WTC11 (cell line): ENCODE measurements at regions of chr19 and their contacts with region 1.

Region 1: GRCh38 chr19:30001791-30002190 is 59.8 kb downstream of the URI1 start:
- DNase-seq: no peak
- ATAC-seq: no peak
- H3K4me3 Mint-ChIP-seq: no peak overlapping the region
- H3K27ac Mint-ChIP-seq: no peak overlapping the region
- H3K4me1 Mint-ChIP-seq: peaks cover 23% of the 10 kb centered on the region
- H3K27me3 Mint-ChIP-seq: no peaks in the 10 kb centered on the region
- CTCF ChIP-seq: no peak

Region 2: DNA sequence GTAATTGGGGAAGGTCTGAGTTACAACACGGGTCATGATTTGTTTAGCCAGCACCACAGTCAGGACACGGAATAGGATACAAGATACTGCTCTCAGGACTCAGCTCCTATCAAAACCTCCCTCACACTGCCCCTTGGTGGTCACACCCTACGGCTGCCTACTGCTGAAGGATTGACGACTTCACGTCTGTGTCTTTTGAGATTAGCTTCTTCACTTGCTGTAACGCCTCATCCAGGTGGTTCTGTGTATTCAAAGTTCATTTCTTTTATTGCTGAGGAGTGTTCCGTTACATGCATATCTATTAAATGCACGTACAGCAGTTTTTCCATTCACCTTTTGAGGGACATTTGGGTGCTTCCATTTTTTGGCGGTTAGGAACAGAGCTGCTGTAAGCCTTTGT is 13.4 kb before region 1 on chr19:
- CTCF ChIA-PET with region 1: interaction called, 10 read pairs
- POLR2A ChIA-PET with region 1: no interaction called
- DNase-seq: peak; percentile 51
- ATAC-seq: peak; percentile 92
- H3K4me3 Mint-ChIP-seq: no peak overlapping the region
- H3K27ac Mint-ChIP-seq: peak overlapping the region; percentile 17; the same call in 1 of the 2 replicates
- H3K4me1 Mint-ChIP-seq: peaks cover 29% of the 10 kb centered on the region
- H3K27me3 Mint-ChIP-seq: no peaks in the 10 kb centered on the region
- CTCF ChIP-seq: no peak

Region 3: GRCh38 chr19:30046522-30046921 is 44.7 kb after region 1 on chr19:
- CTCF ChIA-PET with region 1: no interaction called
- POLR2A ChIA-PET with region 1: no interaction called
- DNase-seq: no peak
- ATAC-seq: peak; percentile 69
- H3K4me3 Mint-ChIP-seq: no peak overlapping the region
- H3K27ac Mint-ChIP-seq: no peak overlapping the region
- H3K4me1 Mint-ChIP-seq: peaks cover 18% of the 10 kb centered on the region
- H3K27me3 Mint-ChIP-seq: no peaks in the 10 kb centered on the region
- CTCF ChIP-seq: no peak